ENCODE measurements at regions of chr1 and their contacts with region 1.

Region 1: GRCh38 chr1:15210651-15211375 is 36.2 kb upstream of the FHAD1 start:
- DNase-seq: no peak
- H3K4me3 ChIP-seq: no peak overlapping the region
- H3K27ac ChIP-seq: no peak overlapping the region
- H3K4me1 ChIP-seq: peaks cover 0 to 9% of the 10 kb centered on the region in 2 donors
- H3K27me3 ChIP-seq: no peaks in the 10 kb centered on the region
- CTCF ChIP-seq: no peak
- POLR2A ChIP-seq: no peak

Region 2: DNA sequence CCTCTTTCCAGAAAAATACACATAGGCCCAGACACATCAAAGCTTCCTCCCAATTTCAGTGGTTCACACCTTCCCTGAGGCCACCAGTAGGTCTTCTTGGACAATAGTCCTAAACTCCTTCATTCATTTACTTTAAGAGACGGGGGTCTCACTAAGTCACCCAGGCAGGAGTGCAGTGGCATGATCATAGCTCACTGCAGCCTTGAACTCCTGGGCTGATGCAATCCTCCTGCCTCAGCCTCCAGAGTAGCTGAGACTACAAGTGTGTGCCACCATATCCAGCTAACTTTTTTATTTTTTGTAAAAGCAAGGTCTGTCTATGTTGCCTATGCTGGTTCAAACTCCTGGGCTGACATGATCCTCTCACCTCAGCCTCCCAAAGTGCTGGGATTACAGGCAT is 28.0 kb after region 1 on chr1:
- intact Hi-C with region 1: loop called (anchors 1 kb)
- DNase-seq: no peak
- H3K4me3 ChIP-seq: no peak overlapping the region
- H3K27ac ChIP-seq: no peak overlapping the region
- H3K4me1 ChIP-seq: no peaks in the 10 kb centered on the region
- H3K27me3 ChIP-seq: no peaks in the 10 kb centered on the region
- CTCF ChIP-seq: no peak
- POLR2A ChIP-seq: no peak